ENCODE measurements at regions of chr11 and their contacts with region 1.

Region 1: GRCh38 chr11:122743949-122744348 is 88.4 kb downstream of the UBASH3B start:
- DNase-seq: peak; percentile 95
- ATAC-seq: peak; percentile 72
- H3K4me3 Mint-ChIP-seq: no peak overlapping the region
- H3K27ac Mint-ChIP-seq: no peak overlapping the region
- H3K4me1 Mint-ChIP-seq: no peaks in the 10 kb centered on the region
- H3K27me3 Mint-ChIP-seq: no peaks in the 10 kb centered on the region
- CTCF ChIP-seq: no peak

Region 2: GRCh38 chr11:122655527-122656072 is 88.3 kb before region 1 on chr11 and contains the start of gene UBASH3B:
- CTCF ChIA-PET with region 1: interaction called, 33 read pairs
- POLR2A ChIA-PET with region 1: interaction called, 27 read pairs
- intact Hi-C with region 1: no loop called
- DNase-seq: peak; percentile 76
- ATAC-seq: peak; percentile 75
- H3K4me3 Mint-ChIP-seq: peak within 1 kb of the TSS; percentile 97
- H3K27ac Mint-ChIP-seq: peak within 1 kb of the TSS; percentile 91
- H3K4me1 Mint-ChIP-seq: peaks cover 31% of the 10 kb centered on the region
- H3K27me3 Mint-ChIP-seq: no peaks in the 10 kb centered on the region
- CTCF ChIP-seq: peak; percentile 11
- total RNA-seq, gene UBASH3B: 36.1 to 40.6 TPM

Region 3: DNA sequence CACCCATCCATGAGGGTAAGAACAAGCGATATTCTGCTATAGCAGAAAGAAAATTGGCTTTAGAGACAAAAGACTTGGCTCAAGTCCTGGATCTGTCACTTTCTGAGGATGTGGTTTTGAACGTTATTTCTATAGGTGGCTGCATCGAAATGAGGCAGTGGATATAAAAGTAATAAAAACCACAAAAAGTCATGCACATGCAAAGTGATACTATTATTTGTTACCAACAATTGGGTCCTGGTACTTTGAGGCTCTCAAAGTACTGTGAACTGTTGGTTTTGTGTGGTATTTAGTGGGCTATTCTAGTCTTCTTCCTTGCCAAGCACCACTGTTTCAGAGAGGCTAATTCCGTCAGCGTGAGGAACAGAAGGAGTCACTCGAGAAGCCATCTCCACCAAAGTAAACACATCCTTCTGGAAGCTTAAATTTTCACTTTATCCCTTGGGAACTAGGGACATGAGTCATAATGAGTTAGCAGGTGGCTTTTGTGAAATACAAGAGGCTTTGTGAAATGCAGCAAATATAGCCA is 75.3 kb before region 1 on chr11:
- CTCF ChIA-PET with region 1: interaction called, 3 read pairs
- POLR2A ChIA-PET with region 1: interaction called, 20 read pairs
- intact Hi-C with region 1: loop called (anchors 5 kb)
- DNase-seq: peak; percentile 33
- ATAC-seq: peak; percentile 79
- H3K4me3 Mint-ChIP-seq: peak overlapping the region; percentile 33
- H3K27ac Mint-ChIP-seq: peak overlapping the region; percentile 89
- H3K4me1 Mint-ChIP-seq: peaks cover 65% of the 10 kb centered on the region
- H3K27me3 Mint-ChIP-seq: no peaks in the 10 kb centered on the region
- CTCF ChIP-seq: no peak

Region 4: DNA sequence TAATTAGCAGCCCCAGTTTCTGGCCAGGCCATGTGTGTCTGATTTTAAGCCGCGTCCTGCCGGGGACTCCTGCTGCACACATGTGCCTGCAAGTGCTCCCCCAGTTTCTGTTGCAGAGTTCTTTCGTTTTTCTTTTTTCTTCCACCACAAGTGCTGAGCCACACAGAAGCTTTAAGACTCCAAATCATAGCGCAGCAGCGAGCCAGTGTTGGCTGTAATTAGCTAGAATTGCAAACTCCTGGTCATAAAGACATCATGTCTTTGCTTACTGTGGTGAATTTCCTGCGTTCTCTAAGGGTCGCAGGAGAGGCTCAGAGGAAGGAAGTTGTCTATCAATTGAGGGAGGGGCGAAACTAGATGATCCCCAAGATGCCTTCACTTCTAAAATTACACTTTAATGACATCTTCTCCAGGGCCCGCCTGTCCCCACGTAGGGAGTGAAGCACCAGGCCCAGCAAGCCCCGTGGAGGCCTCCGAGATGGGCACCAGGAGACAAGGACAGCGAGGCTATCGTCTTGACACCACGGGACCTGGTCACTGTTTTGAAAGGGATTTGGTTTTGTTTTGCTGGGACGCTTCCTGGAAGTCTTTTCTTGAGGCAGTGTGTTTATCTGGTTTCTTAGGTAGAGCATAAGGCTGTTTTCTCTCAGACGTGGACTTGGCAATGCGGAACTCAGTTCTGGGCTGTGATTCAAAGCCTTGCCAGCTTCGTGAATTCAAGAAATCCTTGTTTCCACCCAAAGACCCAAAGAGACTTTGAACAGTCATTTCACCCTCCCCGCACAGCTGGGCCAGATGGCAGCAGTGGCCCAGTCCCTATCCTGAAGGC is 16.6 kb before region 1 on chr11:
- CTCF ChIA-PET with region 1: interaction called, 12 read pairs
- POLR2A ChIA-PET with region 1: interaction called, 38 read pairs
- intact Hi-C with region 1: loop called (anchors 1 kb)
- DNase-seq: peak; percentile 68
- ATAC-seq: peak; percentile 49
- H3K4me3 Mint-ChIP-seq: peak overlapping the region; percentile 69
- H3K27ac Mint-ChIP-seq: peak overlapping the region; percentile 93
- H3K4me1 Mint-ChIP-seq: peaks cover 72% of the 10 kb centered on the region
- H3K27me3 Mint-ChIP-seq: no peaks in the 10 kb centered on the region
- CTCF ChIP-seq: no peak